ENCODE measurements at regions of chr7 and their contacts with region 1.

Region 1: DNA sequence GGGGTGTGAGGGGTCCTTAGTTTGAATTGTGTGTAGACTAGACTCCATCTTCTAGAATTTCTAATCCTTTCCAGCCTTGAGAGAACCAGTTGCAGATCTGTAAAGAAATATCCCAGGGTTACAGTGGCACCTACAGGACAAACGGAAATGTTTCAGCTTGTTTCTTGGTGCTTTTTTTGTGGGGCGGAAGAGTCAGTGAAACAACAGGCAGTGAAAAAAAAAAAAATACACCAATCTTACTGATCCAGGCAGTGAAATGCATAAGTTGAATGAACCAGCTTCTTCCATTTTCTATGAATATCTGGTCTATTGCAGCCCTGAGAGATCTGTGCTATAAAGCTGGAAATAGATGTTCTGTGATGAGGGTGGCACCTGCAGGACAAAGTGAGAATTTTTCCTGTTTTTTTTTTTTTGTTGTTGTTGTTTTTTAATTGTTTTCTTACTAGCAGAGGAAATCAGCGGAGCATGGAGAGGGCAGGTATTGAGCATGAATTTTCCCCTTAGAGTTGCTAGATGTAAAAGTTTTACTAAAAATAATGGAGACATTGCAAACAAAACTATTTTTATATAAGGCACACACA is 81.9 kb upstream of the DYNC1I1 start:
- DNase-seq: peak; percentile 51
- H3K4me3 ChIP-seq: no peak overlapping the region
- H3K27ac ChIP-seq: no peak overlapping the region
- H3K27me3 ChIP-seq: no peaks in the 10 kb centered on the region
- CTCF ChIP-seq: peak; percentile 47

Region 2: DNA sequence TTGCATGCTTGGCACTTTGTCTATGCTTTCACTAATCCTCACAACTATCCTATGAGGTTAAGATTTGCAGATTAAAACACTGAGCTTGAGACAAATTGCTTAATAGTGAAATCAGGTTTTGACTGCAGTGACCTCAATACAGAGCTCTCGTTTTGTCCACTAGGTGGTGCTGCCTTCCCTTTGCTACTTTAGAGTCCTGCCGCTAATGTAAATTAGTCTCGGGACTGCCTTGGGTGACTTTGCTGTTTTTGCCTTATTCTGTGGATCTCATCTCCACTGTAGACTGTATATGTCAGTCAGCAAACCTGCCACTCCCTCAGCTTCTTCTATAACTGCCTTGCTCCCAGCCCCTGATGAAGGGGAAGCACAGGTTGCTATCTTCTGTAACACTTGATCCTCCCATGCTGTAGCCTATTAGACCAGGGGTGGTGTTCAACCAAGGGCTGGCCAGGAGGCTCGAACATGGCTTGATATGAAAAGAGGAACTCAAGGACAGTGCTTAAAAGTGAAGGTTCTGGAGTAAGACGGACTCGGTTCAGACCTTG is 178.7 kb before region 1 on chr7:
- in situ Hi-C with region 1: loop called (anchors 25 kb)
- DNase-seq: peak; percentile 76
- H3K4me3 ChIP-seq: no peak overlapping the region
- H3K27ac ChIP-seq: no peak overlapping the region
- H3K27me3 ChIP-seq: no peaks in the 10 kb centered on the region
- CTCF ChIP-seq: peak; percentile 91